ENCODE measurements at regions of chr12 and their contacts with region 1.

Region 1: DNA sequence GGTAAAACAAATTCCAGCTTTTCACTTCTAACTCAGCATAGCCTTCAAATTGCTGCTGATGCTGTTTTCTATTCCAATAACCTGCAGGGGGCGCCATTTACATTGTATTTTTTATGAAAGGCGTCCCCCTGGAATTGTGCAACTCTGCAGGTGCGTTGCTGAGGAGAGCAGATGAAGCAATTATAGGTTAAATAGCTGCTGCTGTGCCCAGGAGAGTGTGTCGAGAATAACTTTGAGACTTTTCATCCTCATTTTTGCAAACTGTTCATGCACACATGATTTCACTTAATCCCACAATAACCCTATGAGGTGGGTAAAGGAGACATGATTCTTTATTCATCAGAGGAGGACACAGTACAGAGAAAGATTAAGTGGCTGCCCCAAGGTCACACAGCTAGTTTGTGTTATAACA is 75.7 kb downstream of the MYRFL start:
- DNase-seq: peak; percentile 77
- H3K4me3 ChIP-seq: no peak overlapping the region
- H3K27ac ChIP-seq: no peak overlapping the region
- H3K4me1 ChIP-seq: peaks cover 0 to 3% (median 0%) of the 10 kb centered on the region in 4 donors
- H3K27me3 ChIP-seq: no peaks in the 10 kb centered on the region
- CTCF ChIP-seq: peak; percentile 78 to 90 (median 81)
- EP300 ChIP-seq: no peak
- POLR2A ChIP-seq: no peak

Region 2: GRCh38 chr12:69623970-69624369 is 276.8 kb before region 1 on chr12:
- in situ Hi-C with region 1: no loop called
- intact Hi-C with region 1: no loop called
- DNase-seq: no peak
- H3K4me3 ChIP-seq: no peak overlapping the region
- H3K27ac ChIP-seq: no peak overlapping the region
- H3K4me1 ChIP-seq: no peaks in the 10 kb centered on the region
- H3K27me3 ChIP-seq: no peaks in the 10 kb centered on the region
- CTCF ChIP-seq: no peak
- EP300 ChIP-seq: no peak
- POLR2A ChIP-seq: no peak

Region 3: GRCh38 chr12:69698769-69699540 is 201.8 kb before region 1 on chr12 and contains the start of gene BEST3:
- in situ Hi-C with region 1: no loop called
- intact Hi-C with region 1: no loop called
- DNase-seq: no peak
- H3K4me3 ChIP-seq: no peak within 1 kb of the TSS
- H3K27ac ChIP-seq: no peak within 1 kb of the TSS
- H3K4me1 ChIP-seq: no peaks in the 10 kb centered on the region
- H3K27me3 ChIP-seq: no peaks in the 10 kb centered on the region
- CTCF ChIP-seq: no peak
- EP300 ChIP-seq: no peak
- POLR2A ChIP-seq: no peak
- total RNA-seq, gene BEST3: not detected

Region 4: GRCh38 chr12:70242695-70243509 is 342.2 kb after region 1 on chr12 and contains the start of gene CNOT2:
- in situ Hi-C with region 1: loop called in 2 of 4 experiments (anchors 10 to 25 kb)
- intact Hi-C with region 1: no loop called
- DNase-seq: peak; percentile 92
- H3K4me3 ChIP-seq: peak within 1 kb of the TSS; percentile 57 to 94 (median 87)
- H3K27ac ChIP-seq: peak within 1 kb of the TSS; percentile 94 to 99 (median 98)
- H3K4me1 ChIP-seq: peaks cover 34 to 52% (median 42%) of the 10 kb centered on the region in 4 donors
- H3K27me3 ChIP-seq: no peaks in the 10 kb centered on the region
- CTCF ChIP-seq: no peak
- EP300 ChIP-seq: no peak
- POLR2A ChIP-seq: peak; percentile 72
- total RNA-seq, gene CNOT2: 36.8 to 204 (median 139) TPM

Region 5: GRCh38 chr12:70365648-70366518 is 465.2 kb after region 1 on chr12 and contains the start of gene KCNMB4:
- in situ Hi-C with region 1: loop called in 2 of 4 experiments (anchors 25 kb)
- intact Hi-C with region 1: no loop called
- DNase-seq: peak; percentile 59
- H3K4me3 ChIP-seq: peak within 1 kb of the TSS; percentile 35 to 85 (median 58)
- H3K27ac ChIP-seq: peak within 1 kb of the TSS in 3 of 4 donors; percentile 26 to 31 (median 30)
- H3K4me1 ChIP-seq: peaks cover 5 to 27% (median 14%) of the 10 kb centered on the region in 4 donors
- H3K27me3 ChIP-seq: peaks cover 78% of the 10 kb centered on the region
- CTCF ChIP-seq: no peak
- EP300 ChIP-seq: no peak
- POLR2A ChIP-seq: no peak
- total RNA-seq, gene KCNMB4: 1.1 to 10.9 (median 1.4) TPM

Region 6: GRCh38 chr12:70576346-70577282 is 675.9 kb after region 1 on chr12:
- in situ Hi-C with region 1: loop called in 3 of 4 experiments (anchors 5 to 10 kb)
- intact Hi-C with region 1: loop called (anchors 5 kb)
- DNase-seq: no peak
- H3K4me3 ChIP-seq: no peak overlapping the region
- H3K27ac ChIP-seq: no peak overlapping the region
- H3K4me1 ChIP-seq: peaks cover 0 to 2% (median 0%) of the 10 kb centered on the region in 4 donors
- H3K27me3 ChIP-seq: no peaks in the 10 kb centered on the region
- CTCF ChIP-seq: peak; percentile 68 to 79 (median 76)
- EP300 ChIP-seq: no peak
- POLR2A ChIP-seq: no peak

Measured in transverse colon (tissue), 4 donors.